ENCODE measurements at regions of chr6 and their contacts with region 1.

Region 1: GRCh38 chr6:130138909-130139242 is 83.9 kb downstream of the SAMD3 start:
- DNase-seq: no peak
- H3K4me3 ChIP-seq: peak overlapping the region; percentile 32
- H3K4me3 Mint-ChIP-seq: peak overlapping the region; percentile 70 to 91 (median 84)
- H3K27ac ChIP-seq: no peak overlapping the region
- H3K27ac Mint-ChIP-seq: peak overlapping the region; percentile 72 to 96 (median 93)
- H3K4me1 ChIP-seq: peaks cover 53% of the 10 kb centered on the region
- H3K4me1 Mint-ChIP-seq: peaks cover 63 to 83% (median 78%) of the 10 kb centered on the region in 3 donors
- H3K27me3 ChIP-seq: no peaks in the 10 kb centered on the region
- H3K27me3 Mint-ChIP-seq: peaks cover 0 to 2% of the 10 kb centered on the region in 2 donors

Region 2: GRCh38 chr6:130093546-130093945 is 45.3 kb before region 1 on chr6:
- CTCF ChIA-PET with region 1: no interaction called
- POLR2A ChIA-PET with region 1: no interaction called
- DNase-seq: no peak
- H3K4me3 ChIP-seq: no peak overlapping the region
- H3K4me3 Mint-ChIP-seq: no peak overlapping the region
- H3K27ac ChIP-seq: no peak overlapping the region
- H3K27ac Mint-ChIP-seq: no peak overlapping the region
- H3K4me1 ChIP-seq: peaks cover 14% of the 10 kb centered on the region
- H3K4me1 Mint-ChIP-seq: peaks cover 18 to 49% (median 31%) of the 10 kb centered on the region in 3 donors
- H3K27me3 ChIP-seq: no peaks in the 10 kb centered on the region
- H3K27me3 Mint-ChIP-seq: no peaks in the 10 kb centered on the region

Region 3: DNA sequence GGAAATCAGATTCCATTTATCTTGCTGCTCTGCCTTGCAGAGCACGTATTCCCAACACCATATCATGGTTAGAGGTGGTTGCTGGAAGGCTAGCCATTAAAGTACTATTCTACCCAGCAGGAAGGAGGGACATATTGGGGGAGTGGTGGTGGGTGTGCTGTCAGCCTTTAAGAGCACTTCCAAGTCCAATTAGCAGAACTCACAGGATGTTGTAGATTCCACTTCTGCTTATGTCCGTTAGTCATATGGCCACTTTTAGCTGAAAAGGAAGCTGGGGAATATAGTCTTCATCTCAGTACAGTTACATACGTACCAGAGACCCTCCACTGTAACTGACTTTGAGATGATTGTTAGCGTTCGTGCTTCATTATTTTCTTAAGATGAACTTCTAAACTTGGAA is 10.6 kb before region 1 on chr6:
- CTCF ChIA-PET with region 1: no interaction called
- POLR2A ChIA-PET with region 1: no interaction called
- DNase-seq: no peak
- H3K4me3 ChIP-seq: no peak overlapping the region
- H3K4me3 Mint-ChIP-seq: no peak overlapping the region
- H3K27ac ChIP-seq: no peak overlapping the region
- H3K27ac Mint-ChIP-seq: peak overlapping the region in 4 of 8 donors; percentile 12 to 52 (median 43)
- H3K4me1 ChIP-seq: peaks cover 34% of the 10 kb centered on the region
- H3K4me1 Mint-ChIP-seq: peaks cover 68 to 86% (median 69%) of the 10 kb centered on the region in 3 donors
- H3K27me3 ChIP-seq: no peaks in the 10 kb centered on the region
- H3K27me3 Mint-ChIP-seq: no peaks in the 10 kb centered on the region

Region 4: DNA sequence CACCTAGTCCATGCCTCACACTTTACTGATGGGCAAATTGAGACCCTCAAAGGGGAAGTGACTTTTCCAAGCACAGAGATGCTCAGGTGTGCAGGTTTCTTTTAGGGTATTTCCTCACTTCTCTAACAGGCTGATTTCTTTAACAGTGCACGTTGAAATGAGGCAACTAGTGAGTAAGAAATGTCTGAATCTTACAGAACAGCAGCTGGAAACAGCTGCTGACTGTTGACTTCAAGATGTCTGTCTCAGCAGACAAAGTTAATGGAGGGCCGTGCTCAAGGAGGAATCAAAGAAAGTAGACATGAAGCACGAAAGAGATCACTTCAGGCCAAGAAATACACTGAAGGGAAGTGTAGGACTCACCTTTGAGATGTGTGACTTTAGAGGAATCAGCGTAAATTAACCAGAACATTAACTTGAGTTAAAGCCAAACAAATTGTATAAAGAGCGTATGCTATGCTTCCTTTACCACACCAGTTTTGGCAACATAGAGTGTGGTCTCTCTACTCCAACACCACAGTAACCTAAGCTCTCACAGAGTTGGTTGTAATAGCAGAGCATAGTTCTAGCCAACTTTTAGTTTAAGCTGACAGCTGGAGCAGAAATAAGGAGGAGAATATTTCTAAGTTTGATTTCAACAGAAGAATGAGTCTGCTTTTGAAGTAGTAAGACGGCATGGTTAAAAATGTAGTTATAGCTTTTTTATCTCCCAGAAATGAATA is 23.0 kb after region 1 on chr6:
- CTCF ChIA-PET with region 1: no interaction called
- POLR2A ChIA-PET with region 1: interaction called, 11 read pairs
- DNase-seq: no peak
- H3K4me3 ChIP-seq: no peak overlapping the region
- H3K4me3 Mint-ChIP-seq: no peak overlapping the region
- H3K27ac ChIP-seq: no peak overlapping the region
- H3K27ac Mint-ChIP-seq: peak overlapping the region; percentile 4 to 80 (median 42)
- H3K4me1 ChIP-seq: no peaks in the 10 kb centered on the region
- H3K4me1 Mint-ChIP-seq: peaks cover 51 to 75% (median 61%) of the 10 kb centered on the region in 3 donors
- H3K27me3 ChIP-seq: no peaks in the 10 kb centered on the region
- H3K27me3 Mint-ChIP-seq: no peaks in the 10 kb centered on the region

Region 5: DNA sequence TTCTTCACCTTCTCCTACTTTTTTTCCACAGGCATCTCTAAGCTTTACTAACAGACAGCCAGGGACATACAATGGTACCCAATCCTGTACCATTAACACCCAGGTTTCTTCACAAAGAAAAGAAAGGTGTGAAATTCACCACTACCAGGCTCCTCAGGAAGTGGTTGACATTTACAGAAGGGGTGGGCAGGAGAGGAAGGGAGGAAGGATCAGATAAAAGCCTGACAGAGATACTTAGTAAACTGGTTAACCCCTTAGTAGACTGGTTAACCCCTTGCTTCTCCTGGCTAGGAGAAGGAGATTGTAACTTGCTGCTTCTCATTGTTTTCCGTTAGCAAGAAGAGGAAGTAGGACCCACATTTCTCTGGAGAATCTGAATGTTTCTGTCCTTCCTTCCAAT is 76.7 kb after region 1 on chr6:
- CTCF ChIA-PET with region 1: no interaction called
- POLR2A ChIA-PET with region 1: interaction called, 12 read pairs
- DNase-seq: peak; percentile 11 to 82 (median 70)
- H3K4me3 ChIP-seq: peak overlapping the region; percentile 62
- H3K4me3 Mint-ChIP-seq: peak overlapping the region; percentile 89 to 94 (median 91)
- H3K27ac ChIP-seq: no peak overlapping the region
- H3K27ac Mint-ChIP-seq: peak overlapping the region; percentile 65 to 98 (median 90)
- H3K4me1 ChIP-seq: peaks cover 32% of the 10 kb centered on the region
- H3K4me1 Mint-ChIP-seq: peaks cover 58 to 97% (median 93%) of the 10 kb centered on the region in 3 donors
- H3K27me3 ChIP-seq: no peaks in the 10 kb centered on the region
- H3K27me3 Mint-ChIP-seq: no peaks in the 10 kb centered on the region